K562 (cell line): ENCODE measurements at regions of chr10 and their contacts with region 1.

Region 1: DNA sequence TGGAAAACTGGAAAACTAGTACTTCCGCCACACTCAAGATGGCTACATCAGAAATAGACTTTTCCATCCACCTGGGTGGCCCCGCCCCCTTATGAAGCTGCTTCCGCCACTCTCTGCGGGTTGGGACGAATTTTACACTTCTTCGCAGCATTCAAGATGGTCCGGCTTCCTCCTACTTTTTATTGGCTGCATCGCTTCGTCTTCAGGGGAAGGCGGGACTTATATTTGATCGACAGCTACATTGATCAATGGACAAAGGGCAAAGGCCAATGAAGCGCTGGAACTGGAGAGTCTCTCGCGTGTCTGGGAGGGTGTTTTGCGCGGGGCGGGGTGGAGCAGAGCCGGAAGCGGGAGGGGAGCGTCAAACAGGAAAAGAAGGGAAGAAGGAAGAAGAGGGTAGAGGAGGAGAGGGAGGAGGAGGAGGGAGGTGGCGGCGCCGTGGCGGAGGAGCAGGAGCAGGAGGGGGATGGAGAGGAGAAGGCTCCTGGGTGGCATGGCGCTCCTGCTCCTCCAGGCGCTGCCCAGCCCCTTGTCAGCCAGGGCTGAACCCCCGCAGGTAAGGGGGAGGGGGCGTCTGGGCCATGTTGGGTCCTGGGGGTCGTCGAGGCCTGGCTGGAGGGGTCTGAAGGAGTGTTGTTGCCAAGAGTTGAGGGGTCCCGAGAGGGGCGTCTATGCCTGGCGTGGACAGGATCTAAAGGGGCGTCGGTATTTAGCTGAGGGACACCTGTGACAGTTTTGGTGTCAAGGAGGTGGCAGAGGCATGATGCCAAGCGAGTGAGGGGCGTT is at the start of gene WBP1L:
- DNase-seq: peak; percentile 89 to 96 (median 90)
- ATAC-seq: peak; percentile 95
- H3K4me3 ChIP-seq: peak within 1 kb of the TSS; percentile 90
- H3K27ac ChIP-seq: peak within 1 kb of the TSS; percentile 72
- H3K4me1 ChIP-seq: peaks cover 9 to 28% of the 10 kb centered on the region in 2 experiments
- H3K27me3 ChIP-seq: no peaks in the 10 kb centered on the region
- CTCF ChIP-seq: peak in 1 of 3 experiments; percentile 31; a peak in 2 of 6 replicates
- EP300 ChIP-seq: no peak; the same call in 1 of the 2 replicates
- POLR2A ChIP-seq: peak; percentile 78
- RAD21 ChIP-seq: no peak
- polyA plus RNA-seq, gene WBP1L: 3.2 to 5.3 TPM

Region 2: GRCh38 chr10:102776779-102777456 is 33.1 kb after region 1 on chr10:
- CTCF ChIA-PET with region 1: no interaction called
- POLR2A ChIA-PET with region 1: no interaction called
- in situ Hi-C with region 1: no loop called
- intact Hi-C with region 1: loop called (anchors 5 kb)
- DNase-seq: peak; percentile 67 to 73 (median 70)
- ATAC-seq: peak; percentile 81
- H3K4me3 ChIP-seq: no peak overlapping the region
- H3K27ac ChIP-seq: peak overlapping the region; percentile 50; the same call in 2 of the 3 replicates
- H3K4me1 ChIP-seq: peaks cover 41 to 57% of the 10 kb centered on the region in 2 experiments
- H3K27me3 ChIP-seq: no peaks in the 10 kb centered on the region
- CTCF ChIP-seq: no peak
- EP300 ChIP-seq: no peak
- POLR2A ChIP-seq: no peak
- RAD21 ChIP-seq: peak in 1 of 2 experiments; percentile 20; a peak in 1 of 4 replicates

Region 3: GRCh38 chr10:102819060-102819459 is 75.3 kb after region 1 on chr10:
- CTCF ChIA-PET with region 1: no interaction called
- POLR2A ChIA-PET with region 1: no interaction called
- in situ Hi-C with region 1: no loop called
- intact Hi-C with region 1: no loop called
- DNase-seq: no peak
- ATAC-seq: no peak
- H3K4me3 ChIP-seq: no peak overlapping the region
- H3K27ac ChIP-seq: no peak overlapping the region
- H3K4me1 ChIP-seq: peaks cover 14 to 20% of the 10 kb centered on the region in 2 experiments
- H3K27me3 ChIP-seq: no peaks in the 10 kb centered on the region
- CTCF ChIP-seq: no peak
- EP300 ChIP-seq: no peak
- POLR2A ChIP-seq: no peak
- RAD21 ChIP-seq: no peak